ENCODE measurements at regions of chr9 and their contacts with region 1.

Region 1: GRCh38 chr9:110623462-110624025 is 44.0 kb upstream of the SVEP1 start:
- DNase-seq: peak in 2 of 10 donors; percentile 11 to 45

Region 2: DNA sequence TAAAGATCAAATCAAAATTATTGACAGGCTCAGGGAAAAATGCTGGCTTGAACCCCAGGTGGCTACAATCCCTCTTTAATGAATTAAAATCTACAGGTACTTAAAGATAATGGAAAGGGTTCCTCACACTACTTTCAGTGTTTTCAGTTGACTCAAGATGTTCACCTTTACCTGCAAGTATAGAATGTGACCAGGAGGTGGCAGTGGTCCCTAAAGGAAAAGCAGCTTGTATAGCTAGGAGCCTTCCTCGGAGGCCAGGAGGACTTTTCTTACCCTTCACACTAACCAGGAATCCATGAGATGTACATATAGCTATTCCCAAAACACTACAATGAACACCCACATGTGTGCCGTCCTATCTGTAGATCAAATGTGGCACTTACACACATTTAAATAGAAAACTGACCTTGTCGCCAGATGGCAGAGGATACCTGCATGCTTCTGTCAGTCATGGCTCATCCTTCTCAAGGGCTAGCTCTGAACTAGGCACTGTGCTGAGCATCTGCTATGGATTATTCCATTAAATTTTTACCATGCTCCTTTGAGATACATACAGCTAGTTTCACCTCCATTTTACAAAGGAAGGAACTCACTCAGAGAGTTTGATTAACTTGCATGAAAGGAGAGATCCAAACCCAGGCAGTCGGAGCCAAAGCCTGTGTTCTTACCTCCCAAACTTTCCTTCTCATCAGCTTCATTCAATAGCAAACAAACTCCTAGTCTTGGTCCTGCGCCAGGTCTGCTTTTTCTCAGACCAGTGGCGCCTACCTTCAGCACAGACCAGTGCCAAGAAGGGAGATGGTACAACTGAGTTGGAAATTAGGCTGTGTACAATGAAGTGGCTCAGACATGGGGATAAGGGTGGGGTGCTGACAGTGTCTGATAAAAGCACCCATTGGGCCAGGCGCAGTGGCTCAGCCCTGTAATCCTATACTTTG is 440.1 kb before region 1 on chr9:
- intact Hi-C with region 1: loop called (anchors 5 kb)
- DNase-seq: peak in 5 of 10 donors; percentile 26 to 62 (median 54)

Region 3: GRCh38 chr9:110427497-110428104 is 195.9 kb before region 1 on chr9:
- intact Hi-C with region 1: loop called (anchors 5 kb)
- DNase-seq: peak in 8 of 10 donors; percentile 12 to 91 (median 59)

Region 4: DNA sequence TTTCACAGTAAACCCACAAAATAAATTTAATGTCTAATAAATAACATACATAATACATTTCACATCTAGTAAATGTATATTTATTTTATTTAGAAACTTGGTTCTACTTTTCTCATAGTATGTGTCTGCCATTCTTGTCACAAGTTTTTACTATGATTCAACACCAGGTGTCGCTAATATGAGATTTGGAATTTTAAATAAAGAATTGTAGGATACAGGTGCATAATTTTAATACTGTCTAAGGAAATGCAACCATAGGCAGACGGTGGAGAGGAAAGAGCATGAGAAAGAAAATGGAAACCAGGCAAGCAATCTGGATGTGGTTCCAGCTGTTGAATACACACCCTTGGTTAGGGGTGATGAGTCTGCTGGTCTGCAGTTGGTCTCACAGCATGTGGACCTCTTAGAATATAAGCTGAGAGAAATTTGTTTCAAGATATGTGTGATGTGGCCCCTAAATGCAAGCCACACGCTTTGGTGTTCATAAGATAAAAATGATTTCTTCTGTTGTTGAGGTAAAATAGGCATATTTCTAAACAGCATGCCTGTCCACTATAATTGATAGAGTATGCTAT is 171.2 kb before region 1 on chr9:
- intact Hi-C with region 1: loop called (anchors 5 kb)
- DNase-seq: no peak

Region 5: DNA sequence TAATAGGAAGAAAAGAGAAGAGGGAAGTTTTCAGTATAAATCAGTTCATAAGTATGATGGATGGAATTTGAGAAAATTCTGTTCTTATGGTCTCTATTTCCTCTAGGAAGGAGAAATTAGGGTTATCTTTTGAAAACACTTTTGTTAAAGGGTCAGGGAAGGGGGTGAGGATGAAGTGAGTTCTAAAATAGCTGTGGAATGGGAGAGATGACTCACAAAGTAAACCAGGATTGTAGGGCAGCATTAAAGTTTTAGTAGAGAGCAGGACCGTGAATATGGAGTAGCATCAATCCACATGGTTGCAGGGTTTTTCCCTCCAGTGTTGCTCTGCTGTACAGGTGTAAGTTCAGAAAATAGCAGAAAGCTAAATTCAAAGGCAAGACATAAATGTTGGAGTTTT is 77.4 kb after region 1 on chr9:
- intact Hi-C with region 1: no loop called
- DNase-seq: no peak

Measured in posterior cingulate gyrus (tissue), 11 donors.